ENCODE measurements at regions of chr4 and their contacts with region 1.

Region 1: GRCh38 chr4:185640811-185641675 is 105.7 kb upstream of the PDLIM3 start:
- DNase-seq: peak in 3 of 4 experiments; percentile 14 to 43 (median 16)
- ATAC-seq: 0 out of 3 replicates have a peak, but pooled peaks have one; percentile 51
- H3K4me3 ChIP-seq: no peak overlapping the region
- H3K27ac ChIP-seq: no peak overlapping the region
- H3K4me1 ChIP-seq: peaks cover 0 to 5% of the 10 kb centered on the region in 2 experiments; a peak in 1 of 5 replicates
- H3K27me3 ChIP-seq: peaks cover 7 to 26% of the 10 kb centered on the region in 2 experiments; a peak in 4 of 5 replicates
- CTCF ChIP-seq: peak in 2 of 3 experiments; percentile 28 to 40; a peak in 3 of 6 replicates
- EP300 ChIP-seq: no peak
- POLR2A ChIP-seq: no peak
- RAD21 ChIP-seq: peak in 1 of 2 experiments; percentile 53; a peak in 3 of 4 replicates

Region 2: DNA sequence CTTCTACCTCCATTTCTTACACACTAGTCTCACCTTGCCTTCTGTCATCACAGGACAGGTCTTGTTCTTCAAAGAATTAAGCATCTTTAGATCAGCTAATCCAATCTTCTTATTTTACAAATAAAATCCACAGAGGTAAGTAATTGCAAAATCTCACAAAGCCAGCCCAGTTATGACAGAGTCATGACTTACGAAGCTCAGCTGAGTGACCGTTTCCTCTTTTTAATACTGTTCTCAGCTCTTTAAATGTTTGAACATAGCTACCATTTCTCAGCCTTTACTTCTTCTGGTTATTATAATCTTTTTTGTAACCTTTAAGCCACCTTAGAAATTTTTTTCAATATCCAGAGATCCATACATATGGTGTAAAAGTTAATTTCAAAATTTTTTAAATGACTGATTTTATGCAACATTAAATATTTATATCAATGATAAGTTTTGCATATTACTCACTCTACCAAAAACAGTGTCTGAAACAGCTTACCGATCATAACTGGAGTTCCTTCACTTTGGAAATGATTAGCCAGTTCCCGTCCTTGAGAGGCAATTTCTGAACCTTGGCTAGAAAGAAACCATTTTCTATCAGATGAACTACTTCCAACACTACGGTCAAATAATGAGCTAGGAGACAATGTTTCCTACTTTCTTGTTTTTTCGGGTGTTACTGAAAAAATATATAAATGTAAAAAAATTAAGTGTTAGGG is 235.6 kb before region 1 on chr4:
- CTCF ChIA-PET with region 1: no interaction called
- POLR2A ChIA-PET with region 1: no interaction called
- in situ Hi-C with region 1: no loop called
- intact Hi-C with region 1: no loop called
- DNase-seq: no peak
- ATAC-seq: no peak
- H3K4me3 ChIP-seq: no peak overlapping the region
- H3K27ac ChIP-seq: no peak overlapping the region
- H3K4me1 ChIP-seq: no peaks in the 10 kb centered on the region
- H3K27me3 ChIP-seq: no peaks in the 10 kb centered on the region
- CTCF ChIP-seq: no peak
- EP300 ChIP-seq: no peak
- POLR2A ChIP-seq: no peak
- RAD21 ChIP-seq: no peak

Region 3: GRCh38 chr4:185914583-185915199 is 273.6 kb after region 1 on chr4:
- CTCF ChIA-PET with region 1: no interaction called
- POLR2A ChIA-PET with region 1: no interaction called
- in situ Hi-C with region 1: no loop called
- intact Hi-C with region 1: no loop called
- DNase-seq: no peak
- ATAC-seq: no peak
- H3K4me3 ChIP-seq: no peak overlapping the region
- H3K27ac ChIP-seq: no peak overlapping the region
- H3K4me1 ChIP-seq: no peaks in the 10 kb centered on the region
- H3K27me3 ChIP-seq: peaks cover 0 to 4% of the 10 kb centered on the region in 2 experiments; a peak in 2 of 5 replicates
- CTCF ChIP-seq: no peak
- EP300 ChIP-seq: no peak
- POLR2A ChIP-seq: no peak
- RAD21 ChIP-seq: no peak

Region 4: GRCh38 chr4:186021461-186022167 is 380.6 kb after region 1 on chr4:
- CTCF ChIA-PET with region 1: no interaction called
- POLR2A ChIA-PET with region 1: no interaction called
- in situ Hi-C with region 1: no loop called
- intact Hi-C with region 1: loop called (anchors 5 kb)
- DNase-seq: peak in 2 of 4 experiments; percentile 7 to 17
- ATAC-seq: peak; percentile 67
- H3K4me3 ChIP-seq: no peak overlapping the region
- H3K27ac ChIP-seq: no peak overlapping the region
- H3K4me1 ChIP-seq: no peaks in the 10 kb centered on the region
- H3K27me3 ChIP-seq: peaks cover 20 to 43% of the 10 kb centered on the region in 2 experiments; a peak in 4 of 5 replicates
- CTCF ChIP-seq: peak; percentile 50 to 60 (median 58)
- EP300 ChIP-seq: no peak
- POLR2A ChIP-seq: no peak
- RAD21 ChIP-seq: peak; percentile 36 to 66

Region 5: DNA sequence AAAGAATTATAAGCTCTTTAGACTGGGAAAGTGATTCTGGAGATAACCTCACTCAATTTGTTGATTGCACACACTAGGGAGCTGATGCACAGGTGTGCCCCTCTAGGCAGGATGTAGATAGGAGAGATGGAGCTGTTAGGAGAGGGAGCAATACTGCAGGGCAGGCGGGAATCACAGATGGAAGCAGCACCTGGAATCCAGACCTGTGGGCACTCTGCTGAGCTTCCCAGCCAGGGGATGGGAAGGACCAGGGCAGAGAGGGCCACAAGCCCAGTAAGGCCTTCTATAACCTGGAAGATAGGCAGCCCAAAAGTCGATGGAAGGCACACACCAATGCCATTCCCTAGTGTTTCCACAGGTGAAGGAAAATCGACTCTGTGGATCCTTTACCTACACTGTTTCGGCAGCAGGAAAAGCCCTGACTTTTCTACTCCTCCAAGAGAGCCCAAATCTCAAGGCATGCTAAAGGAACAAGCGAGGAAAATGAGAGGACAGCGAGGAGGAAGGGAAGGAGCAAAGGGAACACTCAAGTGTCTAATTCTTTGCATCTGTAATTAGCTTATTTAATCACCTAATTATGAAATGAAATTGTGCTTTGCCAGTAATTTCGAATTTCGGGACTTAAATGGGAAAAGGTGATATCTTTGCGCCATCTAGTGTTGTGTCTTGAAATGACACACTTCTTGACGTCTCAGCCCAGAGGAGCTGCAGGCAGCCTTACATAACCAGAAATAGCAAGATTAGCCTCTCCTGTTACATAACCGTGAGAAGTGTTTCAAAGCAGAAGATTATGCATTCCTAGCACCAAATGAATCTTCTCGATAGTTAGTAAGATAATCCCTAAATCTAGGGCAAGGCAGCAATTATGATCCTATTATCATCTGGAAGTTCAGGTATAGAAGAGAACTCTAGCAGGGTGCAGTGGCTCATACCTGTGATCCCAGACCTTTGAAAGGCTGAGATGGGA is 396.9 kb after region 1 on chr4:
- CTCF ChIA-PET with region 1: interaction called, 10 read pairs
- POLR2A ChIA-PET with region 1: no interaction called
- in situ Hi-C with region 1: no loop called
- intact Hi-C with region 1: loop called (anchors 2 kb)
- DNase-seq: peak; percentile 53 to 74 (median 66)
- ATAC-seq: peak; percentile 81
- H3K4me3 ChIP-seq: no peak overlapping the region
- H3K27ac ChIP-seq: no peak overlapping the region
- H3K4me1 ChIP-seq: no peaks in the 10 kb centered on the region
- H3K27me3 ChIP-seq: peaks cover 0 to 15% of the 10 kb centered on the region in 2 experiments; a peak in 4 of 5 replicates
- CTCF ChIP-seq: peak; percentile 62 to 82 (median 64)
- EP300 ChIP-seq: no peak
- POLR2A ChIP-seq: no peak
- RAD21 ChIP-seq: peak; percentile 65 to 72

Region 6: GRCh38 chr4:186137196-186137794 is 496.3 kb after region 1 on chr4:
- CTCF ChIA-PET with region 1: interaction called, 5 read pairs
- POLR2A ChIA-PET with region 1: no interaction called
- in situ Hi-C with region 1: no loop called
- intact Hi-C with region 1: loop called (anchors 10 kb)
- DNase-seq: peak in 1 of 4 experiments; percentile 18
- ATAC-seq: no peak; the same call in 2 of the 3 replicates
- H3K4me3 ChIP-seq: no peak overlapping the region
- H3K27ac ChIP-seq: no peak overlapping the region
- H3K4me1 ChIP-seq: no peaks in the 10 kb centered on the region
- H3K27me3 ChIP-seq: peaks cover 13 to 37% of the 10 kb centered on the region in 2 experiments
- CTCF ChIP-seq: peak; percentile 39 to 63 (median 41); a peak in 3 of 6 replicates
- EP300 ChIP-seq: no peak
- POLR2A ChIP-seq: no peak
- RAD21 ChIP-seq: peak; percentile 31 to 35; a peak in 3 of 4 replicates